ENCODE measurements at regions of chr4 and their contacts with region 1.

Region 1: GRCh38 chr4:112327965-112328733 is 31.0 kb downstream of the ALPK1 start:
- DNase-seq: peak; percentile 57
- CTCF ChIP-seq: peak; percentile 49

Region 2: DNA sequence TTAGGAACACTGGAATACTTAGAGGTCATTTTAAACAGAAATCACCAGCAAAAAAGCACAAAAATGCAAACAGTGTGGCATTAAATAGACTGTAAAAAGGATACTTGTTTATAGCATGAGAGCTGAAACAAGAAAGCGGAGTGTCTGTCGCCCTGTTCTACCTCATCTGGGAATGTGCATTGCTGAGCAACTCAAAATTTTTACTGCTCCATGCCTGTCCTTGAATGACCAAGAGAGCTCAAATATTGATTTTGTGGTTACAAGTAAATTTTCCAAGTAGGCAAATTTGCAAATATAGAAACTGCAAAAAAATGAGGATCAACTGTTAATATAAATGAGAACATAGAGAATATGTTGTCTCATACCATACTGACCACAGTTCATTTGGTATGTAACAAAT is 71.1 kb before region 1 on chr4:
- CTCF ChIA-PET with region 1: no interaction called
- POLR2A ChIA-PET with region 1: no interaction called
- DNase-seq: no peak
- CTCF ChIP-seq: no peak

Region 3: GRCh38 chr4:112312610-112313239 is 15.4 kb before region 1 on chr4:
- CTCF ChIA-PET with region 1: interaction called, 19 read pairs
- POLR2A ChIA-PET with region 1: no interaction called
- DNase-seq: peak; percentile 74
- CTCF ChIP-seq: no peak

Region 4: DNA sequence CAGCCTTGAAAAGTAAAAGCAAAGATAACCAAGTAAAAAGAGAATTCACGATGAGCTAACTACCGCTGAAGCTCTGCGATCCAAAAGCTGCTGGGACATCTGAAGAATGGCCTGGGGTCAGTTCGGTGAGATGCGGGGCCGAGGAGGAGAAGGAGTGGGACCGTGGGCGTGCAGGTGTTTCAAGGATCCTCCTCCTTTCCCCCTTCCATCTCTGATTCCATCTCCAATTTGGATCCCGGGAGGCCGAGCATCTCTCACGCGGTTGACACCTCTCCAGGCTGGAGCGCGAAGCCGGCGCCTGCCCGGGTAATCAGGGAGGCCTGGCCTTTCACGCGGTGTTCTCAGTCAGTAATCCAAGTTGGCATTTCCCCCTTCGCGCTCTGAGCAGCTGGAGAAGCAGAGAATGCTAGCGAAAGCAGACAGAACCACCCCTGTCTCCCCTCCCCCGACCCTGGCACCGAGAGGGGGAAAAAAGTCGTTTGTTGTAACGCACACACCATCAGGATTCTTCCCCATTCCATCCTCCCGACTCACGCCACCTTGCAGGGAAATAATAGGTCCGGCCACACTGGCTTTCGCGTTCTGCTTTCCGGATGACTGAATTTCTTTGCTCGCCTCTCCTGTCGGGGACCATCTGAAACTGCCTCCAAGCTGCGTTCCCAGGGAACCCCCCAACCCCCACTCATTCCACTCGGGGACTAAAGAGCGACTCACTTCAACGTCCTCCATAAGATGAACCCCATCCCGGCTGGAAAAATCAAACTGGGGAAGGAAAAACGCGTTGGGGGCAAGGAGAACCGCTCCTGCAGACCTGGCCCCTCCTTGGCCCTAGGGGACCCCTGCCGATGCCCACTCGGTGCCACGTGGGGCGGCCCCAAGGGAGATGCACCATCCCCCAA is 181.3 kb after region 1 on chr4:
- CTCF ChIA-PET with region 1: interaction called, 51 read pairs
- POLR2A ChIA-PET with region 1: no interaction called
- DNase-seq: no peak
- CTCF ChIP-seq: no peak

Region 5: GRCh38 chr4:112532267-112532666 is 204.1 kb after region 1 on chr4:
- CTCF ChIA-PET with region 1: interaction called, 12 read pairs
- POLR2A ChIA-PET with region 1: no interaction called
- DNase-seq: no peak
- CTCF ChIP-seq: no peak

Region 6: DNA sequence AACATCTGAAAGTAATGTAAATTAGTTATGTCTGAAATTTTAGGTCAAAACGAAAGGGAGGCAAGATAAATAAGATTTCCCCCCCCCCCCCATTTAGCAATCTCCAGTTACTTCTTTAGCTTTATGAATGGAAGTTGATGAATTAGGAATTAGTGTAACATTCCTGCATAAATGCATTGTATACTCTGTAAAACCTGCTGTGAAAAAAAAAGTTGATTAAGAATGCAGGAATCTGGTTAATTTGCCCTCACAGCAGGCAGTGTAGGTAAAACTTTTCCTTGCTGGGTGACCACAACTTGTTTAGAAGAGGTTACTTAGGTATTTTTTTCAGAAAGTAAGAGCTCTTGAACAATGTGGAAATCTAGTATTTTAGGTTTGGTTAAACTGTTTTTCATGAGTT is 324.1 kb after region 1 on chr4:
- CTCF ChIA-PET with region 1: no interaction called
- POLR2A ChIA-PET with region 1: no interaction called
- DNase-seq: no peak
- CTCF ChIP-seq: no peak

Region 7: DNA sequence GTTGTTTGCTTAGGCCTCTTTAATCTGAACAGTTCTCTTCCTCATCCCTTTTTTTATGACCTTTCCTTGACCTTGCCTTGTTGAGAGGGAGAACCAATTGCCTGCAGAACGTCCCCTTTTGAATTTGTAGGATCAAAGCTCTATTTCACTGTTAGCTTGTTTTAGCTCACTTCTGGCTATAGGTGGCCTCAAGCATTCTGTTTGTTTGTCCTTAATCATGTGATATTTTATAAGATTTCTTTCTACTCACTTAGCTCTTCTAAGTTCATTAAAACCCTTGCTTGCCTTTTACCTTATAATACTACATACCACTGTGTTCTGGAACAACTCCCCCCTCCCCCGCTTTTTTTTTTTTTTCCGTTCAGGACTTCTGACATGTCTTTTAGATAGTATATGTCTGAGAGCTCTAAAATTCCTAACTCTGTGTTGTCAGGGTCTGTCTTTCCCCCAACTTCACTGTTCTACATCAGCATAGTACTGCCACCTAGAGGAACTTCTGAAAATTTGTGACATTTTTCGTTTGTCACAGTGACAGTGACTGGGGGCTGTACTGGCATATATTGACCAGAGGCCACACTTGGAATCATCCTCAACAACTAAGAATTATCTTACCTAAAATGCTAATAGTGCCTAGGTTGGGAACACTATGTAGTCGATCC is 437.3 kb after region 1 on chr4:
- CTCF ChIA-PET with region 1: interaction called, 11 read pairs
- POLR2A ChIA-PET with region 1: no interaction called
- DNase-seq: peak; percentile 51
- CTCF ChIP-seq: peak; percentile 54

Region 8: GRCh38 chr4:112889619-112890527 is 561.7 kb after region 1 on chr4:
- CTCF ChIA-PET with region 1: no interaction called
- POLR2A ChIA-PET with region 1: no interaction called
- DNase-seq: no peak
- CTCF ChIP-seq: no peak